ENCODE measurements at regions of chr6 and their contacts with region 1.

Region 1: GRCh38 chr6:17599885-17600526 is at the start of gene FAM8A1:
- DNase-seq: peak; percentile 89

Region 2: GRCh38 chr6:17156112-17156921 is 443.7 kb before region 1 on chr6:
- in situ Hi-C with region 1: loop called (anchors 25 kb)
- DNase-seq: peak; percentile 49

Region 3: DNA sequence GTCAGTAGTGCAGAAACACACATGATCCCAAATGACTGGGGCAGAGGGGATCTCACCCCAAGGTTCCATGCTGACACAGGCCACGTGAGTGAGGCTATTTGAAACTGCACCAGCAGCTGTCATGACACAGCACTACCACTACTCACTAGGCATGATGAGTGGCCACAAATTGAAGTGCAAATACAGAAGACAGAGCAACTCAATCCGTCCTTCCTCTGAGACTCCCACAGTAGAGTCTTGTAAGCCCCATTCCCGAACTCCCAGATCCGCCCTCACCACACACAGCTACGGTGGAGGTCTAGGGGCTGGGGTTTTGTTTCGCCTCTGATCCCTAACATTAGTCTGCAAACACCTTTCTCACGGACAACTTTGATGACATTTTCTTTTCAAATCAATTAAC is 220.0 kb after region 1 on chr6:
- in situ Hi-C with region 1: loop called (anchors 25 kb)
- DNase-seq: no peak